ENCODE measurements at regions of chr13 and their contacts with region 1.

Region 1: GRCh38 chr13:108033800-108034707 is 181.3 kb downstream of the LIG4 start:
- DNase-seq: no peak
- H3K4me3 Mint-ChIP-seq: no peak overlapping the region
- H3K27ac Mint-ChIP-seq: peak overlapping the region; percentile 61
- H3K4me1 Mint-ChIP-seq: peaks cover 21% of the 10 kb centered on the region
- H3K27me3 Mint-ChIP-seq: no peaks in the 10 kb centered on the region
- CTCF ChIP-seq: no peak

Region 2: DNA sequence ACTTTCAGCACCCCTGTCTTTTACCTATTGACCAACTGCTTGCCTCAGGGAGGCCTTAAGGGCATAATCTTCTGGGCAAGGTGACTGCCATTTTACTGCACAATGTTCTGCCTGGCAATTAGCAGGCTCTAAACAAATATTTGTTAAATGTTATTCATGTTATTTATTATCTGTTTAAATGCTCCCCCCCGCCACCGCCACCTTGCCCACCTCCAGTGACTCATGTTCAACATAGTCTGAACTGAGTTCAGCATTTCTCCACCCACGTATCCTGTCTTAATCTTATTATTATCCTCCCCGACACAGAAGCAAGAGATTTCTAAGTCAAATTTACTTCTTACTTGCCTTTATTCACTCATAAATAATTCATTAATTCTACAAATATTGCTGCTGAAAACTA is 36.4 kb after region 1 on chr13:
- CTCF ChIA-PET with region 1: no interaction called
- intact Hi-C with region 1: loop called (anchors 1 kb)
- DNase-seq: no peak
- H3K4me3 Mint-ChIP-seq: no peak overlapping the region
- H3K27ac Mint-ChIP-seq: peak overlapping the region; percentile 89
- H3K4me1 Mint-ChIP-seq: peaks cover 19% of the 10 kb centered on the region
- H3K27me3 Mint-ChIP-seq: no peaks in the 10 kb centered on the region
- CTCF ChIP-seq: no peak

Region 3: GRCh38 chr13:108200781-108201398 is 166.8 kb after region 1 on chr13:
- CTCF ChIA-PET with region 1: no interaction called
- intact Hi-C with region 1: no loop called
- DNase-seq: no peak
- H3K4me3 Mint-ChIP-seq: no peak overlapping the region
- H3K27ac Mint-ChIP-seq: no peak overlapping the region
- H3K4me1 Mint-ChIP-seq: no peaks in the 10 kb centered on the region
- H3K27me3 Mint-ChIP-seq: no peaks in the 10 kb centered on the region
- CTCF ChIP-seq: no peak

Measured in Calu3 (cell line).